H1 (cell line): ENCODE measurements at regions of chr7 and their contacts with region 1.

Region 1: GRCh38 chr7:131859147-131859821 is 302.9 kb upstream of the PODXL start:
- DNase-seq: peak; percentile 38 to 88
- H3K4me3 ChIP-seq: no peak overlapping the region
- H3K27ac ChIP-seq: no peak overlapping the region
- H3K4me1 ChIP-seq: no peaks in the 10 kb centered on the region
- H3K27me3 ChIP-seq: no peaks in the 10 kb centered on the region
- CTCF ChIP-seq: peak; percentile 86 to 98 (median 91)
- EP300 ChIP-seq: no peak
- POLR2A ChIP-seq: no peak
- RAD21 ChIP-seq: peak; percentile 90 to 92

Region 2: GRCh38 chr7:131625817-131626372 is 233.4 kb before region 1 on chr7:
- CTCF ChIA-PET with region 1: no interaction called
- POLR2A ChIA-PET with region 1: no interaction called
- DNase-seq: peak; percentile 76 to 82
- H3K4me3 ChIP-seq: no peak overlapping the region; a peak in 1 of 8 replicates
- H3K27ac ChIP-seq: peak overlapping the region; percentile 53; the same call in 1 of the 2 replicates
- H3K4me1 ChIP-seq: peaks cover 7 to 22% (median 15%) of the 10 kb centered on the region in 4 experiments
- H3K27me3 ChIP-seq: no peaks in the 10 kb centered on the region
- CTCF ChIP-seq: peak in 2 of 3 experiments; percentile 12 to 34; a peak in 3 of 4 replicates
- EP300 ChIP-seq: no peak; a peak in 1 of 3 replicates
- POLR2A ChIP-seq: no peak
- RAD21 ChIP-seq: peak in 1 of 2 experiments; percentile 20; a peak in 2 of 4 replicates

Region 3: DNA sequence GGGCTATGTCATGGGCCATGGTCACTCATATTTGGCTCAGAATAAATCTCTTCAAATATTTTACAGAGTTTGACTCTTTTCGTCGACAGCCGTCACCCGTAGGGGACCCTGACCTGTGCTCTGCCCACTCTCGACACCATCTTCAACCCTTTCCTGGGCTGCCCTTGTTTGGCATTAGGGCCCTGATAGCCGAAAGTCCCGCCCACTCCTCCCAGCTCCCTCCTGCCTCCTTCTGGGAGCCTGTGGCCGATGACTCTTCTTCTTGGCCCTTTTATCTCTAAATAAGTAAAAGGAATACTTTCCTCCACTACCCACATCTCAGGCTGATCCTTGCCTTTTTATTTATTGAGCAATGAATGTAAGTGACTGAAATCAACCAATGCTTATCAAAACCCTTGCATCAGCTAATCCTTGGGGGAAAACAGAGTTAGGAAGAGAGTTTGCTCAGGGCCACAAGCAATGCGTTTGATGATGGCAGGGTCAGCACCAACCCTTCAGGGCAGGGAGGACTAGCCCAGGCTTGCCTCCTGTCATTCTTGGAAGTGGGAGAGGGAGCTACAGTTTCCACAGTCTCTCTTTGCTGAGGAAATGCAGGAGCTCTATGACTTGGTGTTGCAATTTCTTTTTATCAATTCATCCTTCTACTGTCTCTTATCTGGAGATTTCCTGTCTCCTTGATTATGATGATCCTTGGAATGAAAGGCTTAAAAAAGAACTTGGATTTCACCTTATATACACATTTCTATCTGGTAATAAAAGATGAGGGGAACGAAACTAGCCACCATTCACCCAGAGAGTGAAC is 84.7 kb before region 1 on chr7:
- CTCF ChIA-PET with region 1: interaction called, 10 read pairs
- POLR2A ChIA-PET with region 1: no interaction called
- DNase-seq: no peak
- H3K4me3 ChIP-seq: no peak overlapping the region
- H3K27ac ChIP-seq: no peak overlapping the region
- H3K4me1 ChIP-seq: 0 out of 7 replicates have a peak, but pooled peaks cover 0 to 4% (median 0%) of the 10 kb centered on the region in 4 experiments
- H3K27me3 ChIP-seq: no peaks in the 10 kb centered on the region
- CTCF ChIP-seq: peak; percentile 4 to 32 (median 26); a peak in 3 of 4 replicates
- EP300 ChIP-seq: no peak
- POLR2A ChIP-seq: no peak
- RAD21 ChIP-seq: peak in 1 of 2 experiments; percentile 32; a peak in 1 of 4 replicates

Region 4: GRCh38 chr7:131829947-131830558 is 29.2 kb before region 1 on chr7:
- CTCF ChIA-PET with region 1: interaction called, 11 read pairs
- POLR2A ChIA-PET with region 1: no interaction called
- DNase-seq: peak; percentile 38 to 80
- H3K4me3 ChIP-seq: peak overlapping the region in 1 of 4 experiments; percentile 33; a peak in 1 of 8 replicates
- H3K27ac ChIP-seq: no peak overlapping the region
- H3K4me1 ChIP-seq: peaks cover 4 to 10% (median 6%) of the 10 kb centered on the region in 4 experiments
- H3K27me3 ChIP-seq: no peaks in the 10 kb centered on the region
- CTCF ChIP-seq: peak; percentile 13 to 37 (median 30); a peak in 3 of 4 replicates
- EP300 ChIP-seq: no peak
- POLR2A ChIP-seq: no peak
- RAD21 ChIP-seq: peak; percentile 31 to 60; a peak in 3 of 4 replicates

Region 5: DNA sequence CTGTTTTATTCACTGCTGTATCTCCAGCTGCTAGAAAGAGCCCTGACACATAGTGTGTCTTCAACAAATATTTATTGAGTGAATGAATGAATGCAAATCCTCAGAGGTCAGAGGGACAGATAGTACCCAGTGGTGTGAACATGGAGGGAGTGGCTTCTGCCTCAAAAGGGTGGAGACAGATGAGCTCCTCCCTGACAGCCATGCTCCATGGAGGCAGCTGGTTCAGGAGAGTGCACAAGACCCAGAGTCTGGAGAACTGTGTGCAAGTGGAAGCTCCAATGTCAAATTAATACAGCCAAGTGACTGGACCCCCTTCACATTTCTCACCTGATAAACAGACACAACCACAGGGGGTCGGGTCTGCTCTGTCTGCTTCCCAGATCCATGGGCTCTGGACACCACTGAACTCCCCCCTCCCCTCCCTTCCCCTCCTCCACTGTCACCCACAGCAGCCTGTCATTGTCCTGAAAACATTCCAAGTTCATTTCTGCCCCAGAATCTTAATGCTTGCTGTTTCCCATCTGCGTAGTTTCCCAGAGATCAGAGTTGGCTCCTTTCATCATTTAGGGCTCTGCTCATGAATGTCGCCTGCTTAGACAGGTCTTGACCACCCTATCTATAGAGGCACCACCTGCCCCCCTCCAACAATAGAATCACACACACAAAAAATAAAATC is 10.0 kb after region 1 on chr7:
- CTCF ChIA-PET with region 1: interaction called, 35 read pairs
- POLR2A ChIA-PET with region 1: interaction called, 3 read pairs
- DNase-seq: no peak
- H3K4me3 ChIP-seq: no peak overlapping the region
- H3K27ac ChIP-seq: no peak overlapping the region
- H3K4me1 ChIP-seq: no peaks in the 10 kb centered on the region
- H3K27me3 ChIP-seq: no peaks in the 10 kb centered on the region; a peak in 1 of 7 replicates
- CTCF ChIP-seq: no peak
- EP300 ChIP-seq: no peak
- POLR2A ChIP-seq: no peak
- RAD21 ChIP-seq: no peak

Region 6: DNA sequence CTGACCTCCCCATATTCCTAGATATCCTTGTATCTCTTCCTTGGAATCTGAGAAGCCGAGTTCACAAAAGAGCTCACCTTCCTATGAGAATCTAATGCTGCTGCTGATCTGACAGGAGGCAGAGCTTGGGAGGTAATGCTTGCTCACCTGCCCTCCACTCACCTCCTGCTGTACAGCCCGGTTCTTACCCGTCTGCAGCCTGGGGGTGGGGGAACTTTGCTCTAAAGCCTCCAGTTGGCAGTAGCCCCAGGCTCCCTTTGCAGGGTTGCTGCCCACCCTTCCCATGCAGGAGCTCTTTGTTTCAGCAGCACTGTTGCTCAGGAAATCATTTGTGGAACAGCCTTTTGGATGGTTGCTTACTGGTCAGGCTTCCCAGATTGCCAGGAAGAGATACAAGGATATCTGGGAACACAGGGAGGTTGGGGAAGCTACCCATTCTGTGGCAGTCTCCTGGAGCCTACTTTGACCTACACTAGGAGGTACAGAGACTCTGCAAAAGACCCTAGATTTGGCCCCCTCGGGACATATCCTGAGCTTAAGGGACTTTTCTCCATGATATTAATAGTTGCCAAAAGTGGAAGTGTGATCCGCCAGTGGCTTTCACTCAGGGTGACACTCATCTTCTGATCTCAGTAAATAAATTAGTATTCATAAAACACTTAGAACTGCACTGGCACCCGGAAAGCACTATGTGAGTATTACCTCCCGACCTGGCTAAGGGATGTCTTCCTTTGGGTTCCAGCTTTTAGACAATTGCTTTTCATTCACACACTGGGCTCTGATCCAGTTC is 60.8 kb after region 1 on chr7:
- CTCF ChIA-PET with region 1: interaction called, 19 read pairs
- POLR2A ChIA-PET with region 1: no interaction called
- DNase-seq: no peak
- H3K4me3 ChIP-seq: no peak overlapping the region
- H3K27ac ChIP-seq: no peak overlapping the region
- H3K4me1 ChIP-seq: peaks cover 0 to 2% (median 0%) of the 10 kb centered on the region in 4 experiments; a peak in 1 of 7 replicates
- H3K27me3 ChIP-seq: no peaks in the 10 kb centered on the region
- CTCF ChIP-seq: no peak
- EP300 ChIP-seq: no peak
- POLR2A ChIP-seq: no peak
- RAD21 ChIP-seq: no peak